Caco-2 (cell line): ENCODE measurements at regions of chr3 and their contacts with region 1.

Region 1: DNA sequence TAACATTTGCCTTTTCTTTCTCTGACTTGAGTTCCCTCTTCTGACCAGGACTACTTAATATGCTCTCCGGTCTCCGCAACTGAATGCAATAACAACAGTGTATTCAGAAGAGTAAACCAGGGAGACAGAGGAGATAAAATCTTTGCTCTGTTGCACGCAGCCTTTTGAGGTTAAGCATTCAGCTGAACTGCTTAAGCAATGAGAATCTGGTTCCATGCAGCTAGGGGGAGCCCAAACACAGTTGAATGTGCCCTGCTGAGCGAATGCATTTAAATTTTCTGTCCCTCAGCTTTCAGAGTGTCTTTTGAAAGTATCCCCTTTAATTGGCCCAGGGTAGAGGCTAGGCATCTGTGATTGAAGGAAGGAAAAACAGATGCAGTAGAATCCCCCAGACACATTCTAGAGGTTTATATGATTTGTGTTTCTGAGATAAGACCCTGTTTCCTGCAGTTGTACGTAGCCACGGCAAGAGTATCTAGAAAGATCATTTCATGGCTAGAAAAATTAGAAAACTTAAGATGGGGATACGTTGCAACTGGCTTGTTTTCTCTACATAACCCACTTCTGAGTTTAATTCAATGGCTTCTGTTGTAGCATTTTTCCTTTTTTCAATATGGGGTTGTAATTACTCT is 309.6 kb downstream of the TUSC7 start:
- DNase-seq: peak; percentile 45 to 59
- H3K4me3 ChIP-seq: no peak overlapping the region
- H3K4me3 Mint-ChIP-seq: no peak overlapping the region
- H3K27ac Mint-ChIP-seq: no peak overlapping the region
- H3K4me1 ChIP-seq: no peaks in the 10 kb centered on the region
- H3K4me1 Mint-ChIP-seq: peaks cover 6% of the 10 kb centered on the region
- H3K27me3 ChIP-seq: no peaks in the 10 kb centered on the region
- H3K27me3 Mint-ChIP-seq: peaks cover 21% of the 10 kb centered on the region
- CTCF ChIP-seq: peak; percentile 51 to 81

Region 2: GRCh38 chr3:116770815-116771450 is 248.3 kb before region 1 on chr3:
- CTCF ChIA-PET with region 1: no interaction called
- POLR2A ChIA-PET with region 1: no interaction called
- intact Hi-C with region 1: loop called (anchors 1 kb)
- DNase-seq: peak; percentile 74 to 75
- H3K4me3 ChIP-seq: no peak overlapping the region
- H3K4me3 Mint-ChIP-seq: no peak overlapping the region
- H3K27ac Mint-ChIP-seq: no peak overlapping the region
- H3K4me1 ChIP-seq: no peaks in the 10 kb centered on the region
- H3K4me1 Mint-ChIP-seq: no peaks in the 10 kb centered on the region
- H3K27me3 ChIP-seq: no peaks in the 10 kb centered on the region
- H3K27me3 Mint-ChIP-seq: peaks cover 3% of the 10 kb centered on the region
- CTCF ChIP-seq: peak; percentile 81 to 95

Region 3: GRCh38 chr3:116863822-116864589 is 155.2 kb before region 1 on chr3:
- CTCF ChIA-PET with region 1: no interaction called
- POLR2A ChIA-PET with region 1: no interaction called
- intact Hi-C with region 1: loop called (anchors 2 kb)
- DNase-seq: peak in 1 of 2 experiments; percentile 14
- H3K4me3 ChIP-seq: no peak overlapping the region
- H3K4me3 Mint-ChIP-seq: no peak overlapping the region
- H3K27ac Mint-ChIP-seq: no peak overlapping the region
- H3K4me1 ChIP-seq: no peaks in the 10 kb centered on the region
- H3K4me1 Mint-ChIP-seq: no peaks in the 10 kb centered on the region
- H3K27me3 ChIP-seq: no peaks in the 10 kb centered on the region
- H3K27me3 Mint-ChIP-seq: no peaks in the 10 kb centered on the region
- CTCF ChIP-seq: peak in 1 of 2 experiments; percentile 25

Region 4: GRCh38 chr3:117181222-117181621 is 162.0 kb after region 1 on chr3:
- CTCF ChIA-PET with region 1: no interaction called
- POLR2A ChIA-PET with region 1: no interaction called
- intact Hi-C with region 1: no loop called
- DNase-seq: no peak
- H3K4me3 ChIP-seq: no peak overlapping the region
- H3K4me3 Mint-ChIP-seq: no peak overlapping the region
- H3K27ac Mint-ChIP-seq: no peak overlapping the region
- H3K4me1 ChIP-seq: no peaks in the 10 kb centered on the region
- H3K4me1 Mint-ChIP-seq: no peaks in the 10 kb centered on the region
- H3K27me3 ChIP-seq: no peaks in the 10 kb centered on the region
- H3K27me3 Mint-ChIP-seq: peaks cover 6% of the 10 kb centered on the region
- CTCF ChIP-seq: no peak

Region 5: GRCh38 chr3:117355566-117355965 is 336.4 kb after region 1 on chr3:
- CTCF ChIA-PET with region 1: no interaction called
- POLR2A ChIA-PET with region 1: no interaction called
- intact Hi-C with region 1: loop called (anchors 1 kb)
- DNase-seq: peak in 1 of 2 experiments; percentile 18
- H3K4me3 ChIP-seq: no peak overlapping the region
- H3K4me3 Mint-ChIP-seq: no peak overlapping the region
- H3K27ac Mint-ChIP-seq: no peak overlapping the region
- H3K4me1 ChIP-seq: no peaks in the 10 kb centered on the region
- H3K4me1 Mint-ChIP-seq: no peaks in the 10 kb centered on the region
- H3K27me3 ChIP-seq: no peaks in the 10 kb centered on the region
- H3K27me3 Mint-ChIP-seq: no peaks in the 10 kb centered on the region
- CTCF ChIP-seq: peak; percentile 32 to 35

Region 6: GRCh38 chr3:117439812-117440211 is 420.6 kb after region 1 on chr3:
- CTCF ChIA-PET with region 1: no interaction called
- POLR2A ChIA-PET with region 1: no interaction called
- intact Hi-C with region 1: loop called (anchors 1 kb)
- DNase-seq: peak in 1 of 2 experiments; percentile 43
- H3K4me3 ChIP-seq: no peak overlapping the region
- H3K4me3 Mint-ChIP-seq: no peak overlapping the region
- H3K27ac Mint-ChIP-seq: no peak overlapping the region
- H3K4me1 ChIP-seq: no peaks in the 10 kb centered on the region
- H3K4me1 Mint-ChIP-seq: no peaks in the 10 kb centered on the region
- H3K27me3 ChIP-seq: no peaks in the 10 kb centered on the region
- H3K27me3 Mint-ChIP-seq: peaks cover 13% of the 10 kb centered on the region
- CTCF ChIP-seq: peak; percentile 45 to 47

Region 7: GRCh38 chr3:117526470-117527079 is 507.4 kb after region 1 on chr3:
- CTCF ChIA-PET with region 1: interaction called, 4 read pairs
- POLR2A ChIA-PET with region 1: no interaction called
- intact Hi-C with region 1: loop called (anchors 1 kb)
- DNase-seq: peak in 1 of 2 experiments; percentile 50
- H3K4me3 ChIP-seq: no peak overlapping the region
- H3K4me3 Mint-ChIP-seq: no peak overlapping the region
- H3K27ac Mint-ChIP-seq: no peak overlapping the region
- H3K4me1 ChIP-seq: no peaks in the 10 kb centered on the region
- H3K4me1 Mint-ChIP-seq: no peaks in the 10 kb centered on the region
- H3K27me3 ChIP-seq: no peaks in the 10 kb centered on the region
- H3K27me3 Mint-ChIP-seq: peaks cover 7% of the 10 kb centered on the region
- CTCF ChIP-seq: peak; percentile 58 to 61

Region 8: GRCh38 chr3:117719316-117719926 is 700.2 kb after region 1 on chr3:
- CTCF ChIA-PET with region 1: no interaction called
- POLR2A ChIA-PET with region 1: no interaction called
- intact Hi-C with region 1: loop called (anchors 1 kb)
- DNase-seq: peak in 1 of 2 experiments; percentile 14
- H3K4me3 ChIP-seq: no peak overlapping the region
- H3K4me3 Mint-ChIP-seq: no peak overlapping the region
- H3K27ac Mint-ChIP-seq: no peak overlapping the region
- H3K4me1 ChIP-seq: no peaks in the 10 kb centered on the region
- H3K4me1 Mint-ChIP-seq: no peaks in the 10 kb centered on the region
- H3K27me3 ChIP-seq: no peaks in the 10 kb centered on the region
- H3K27me3 Mint-ChIP-seq: peaks cover 3% of the 10 kb centered on the region
- CTCF ChIP-seq: peak; percentile 57 to 68